Activated naive CD4-positive, alpha-beta T cell treated with anti-CD3 and anti-CD28 coated beads for 36 hours (primary cell): ENCODE measurements at regions of chr3 and their contacts with region 1.

Region 1: GRCh38 chr3:32460031-32460749 is 42.5 kb downstream of the CMTM6 start:
- DNase-seq: peak; percentile 86
- H3K4me3 Mint-ChIP-seq: peak overlapping the region; percentile 67
- H3K27ac Mint-ChIP-seq: no peak overlapping the region
- H3K4me1 Mint-ChIP-seq: peaks cover 36% of the 10 kb centered on the region
- H3K27me3 Mint-ChIP-seq: no peaks in the 10 kb centered on the region

Region 2: GRCh38 chr3:32391643-32392535 is 68.3 kb before region 1 on chr3 and contains the start of gene CMTM7:
- CTCF ChIA-PET with region 1: interaction called, 3 read pairs
- intact Hi-C with region 1: loop called (anchors 1 kb)
- DNase-seq: peak; percentile 82
- H3K4me3 Mint-ChIP-seq: peak within 1 kb of the TSS; percentile 95
- H3K27ac Mint-ChIP-seq: peak within 1 kb of the TSS; percentile 93
- H3K4me1 Mint-ChIP-seq: peaks cover 54% of the 10 kb centered on the region
- H3K27me3 Mint-ChIP-seq: no peaks in the 10 kb centered on the region
- total RNA-seq, gene CMTM7: 59.1 to 60.2 TPM

Region 3: DNA sequence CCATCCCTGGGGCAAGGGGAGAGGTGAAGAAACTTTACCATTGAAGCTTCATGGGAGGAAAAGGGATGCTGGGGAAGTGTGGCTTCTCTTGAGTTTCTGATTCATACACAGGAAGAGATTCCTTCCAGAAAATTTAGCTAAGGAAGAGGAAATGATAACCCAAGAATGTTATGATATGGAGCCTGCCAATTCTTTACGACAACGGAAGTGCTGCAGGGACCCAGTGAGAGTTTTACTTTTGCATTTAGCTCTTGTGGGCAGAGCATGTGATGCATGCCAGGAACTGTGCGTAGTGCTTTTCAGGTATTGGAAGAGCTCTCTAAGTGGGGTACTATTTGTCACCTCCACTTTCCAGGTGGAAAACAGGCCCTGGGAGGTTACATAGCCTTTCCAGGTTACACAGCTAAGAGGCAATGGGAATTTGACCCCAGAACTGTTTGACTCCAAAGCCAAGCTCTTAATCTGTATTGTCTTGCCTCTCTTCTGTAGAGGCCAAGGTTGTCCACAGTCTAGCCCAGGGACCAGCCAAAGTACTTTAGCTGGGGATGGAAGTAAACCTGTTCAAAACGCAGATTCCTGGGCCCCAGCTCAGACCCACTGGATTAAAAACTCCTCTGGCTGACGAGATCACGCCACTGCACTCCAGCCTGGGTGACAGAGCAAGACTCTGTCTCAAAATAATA is 45.5 kb before region 1 on chr3:
- CTCF ChIA-PET with region 1: interaction called, 3 read pairs
- intact Hi-C with region 1: loop called (anchors 1 kb)
- DNase-seq: peak; percentile 78
- H3K4me3 Mint-ChIP-seq: peak overlapping the region; percentile 40
- H3K27ac Mint-ChIP-seq: peak overlapping the region; percentile 94
- H3K4me1 Mint-ChIP-seq: peaks cover 81% of the 10 kb centered on the region
- H3K27me3 Mint-ChIP-seq: no peaks in the 10 kb centered on the region

Region 4: DNA sequence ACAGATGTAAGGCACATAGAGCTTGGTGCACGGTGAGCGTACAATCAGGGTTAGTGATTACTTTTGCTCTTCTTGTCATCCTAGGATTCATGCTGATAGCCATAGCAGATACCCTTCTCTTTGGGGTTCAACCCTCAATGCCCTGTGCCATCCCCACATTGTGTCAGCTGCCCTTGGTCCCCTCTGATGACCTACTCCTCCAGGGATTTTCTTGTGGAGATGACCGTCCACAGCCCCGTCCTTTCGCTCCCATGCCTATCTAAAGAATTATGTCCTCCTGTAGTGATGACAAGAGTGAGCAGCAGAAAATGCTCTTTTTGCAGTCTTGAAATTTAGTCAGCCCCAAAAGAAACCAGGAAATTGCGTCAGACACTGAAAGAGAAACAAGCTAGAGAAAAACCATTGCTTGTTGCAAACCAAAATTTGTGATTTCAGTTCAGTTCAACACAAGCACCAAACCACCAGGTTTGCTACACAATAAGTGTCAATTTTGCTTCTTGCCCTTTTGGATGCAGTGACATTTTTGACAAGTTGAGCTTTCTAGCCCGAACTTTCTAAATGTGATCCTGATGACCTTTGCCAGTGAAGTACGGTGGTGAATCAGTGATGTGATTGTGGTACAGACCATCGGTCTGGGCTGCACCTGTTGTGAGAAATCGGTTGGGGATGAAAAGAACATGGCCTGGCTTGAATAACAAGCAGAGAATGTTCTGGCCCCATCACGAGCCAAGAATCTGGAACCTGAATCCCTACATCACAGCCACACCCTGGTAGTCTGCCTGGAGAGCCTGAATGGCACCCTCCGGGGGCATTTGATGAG is 27.3 kb before region 1 on chr3:
- CTCF ChIA-PET with region 1: interaction called, 5 read pairs
- intact Hi-C with region 1: loop called (anchors 1 kb)
- DNase-seq: peak; percentile 59
- H3K4me3 Mint-ChIP-seq: peak overlapping the region; percentile 76
- H3K27ac Mint-ChIP-seq: peak overlapping the region; percentile 99
- H3K4me1 Mint-ChIP-seq: peaks cover 84% of the 10 kb centered on the region
- H3K27me3 Mint-ChIP-seq: no peaks in the 10 kb centered on the region

Region 5: GRCh38 chr3:32502118-32502945 is 42.1 kb after region 1 on chr3 and contains the start of gene CMTM6:
- CTCF ChIA-PET with region 1: no interaction called
- intact Hi-C with region 1: loop called (anchors 2 kb)
- DNase-seq: peak; percentile 81
- H3K4me3 Mint-ChIP-seq: peak within 1 kb of the TSS; percentile 97
- H3K27ac Mint-ChIP-seq: peak within 1 kb of the TSS; percentile 89
- H3K4me1 Mint-ChIP-seq: peaks cover 27% of the 10 kb centered on the region
- H3K27me3 Mint-ChIP-seq: no peaks in the 10 kb centered on the region
- total RNA-seq, gene CMTM6: 43.7 to 44.3 TPM